ENCODE measurements at regions of chr4 and their contacts with region 1.

Region 1: DNA sequence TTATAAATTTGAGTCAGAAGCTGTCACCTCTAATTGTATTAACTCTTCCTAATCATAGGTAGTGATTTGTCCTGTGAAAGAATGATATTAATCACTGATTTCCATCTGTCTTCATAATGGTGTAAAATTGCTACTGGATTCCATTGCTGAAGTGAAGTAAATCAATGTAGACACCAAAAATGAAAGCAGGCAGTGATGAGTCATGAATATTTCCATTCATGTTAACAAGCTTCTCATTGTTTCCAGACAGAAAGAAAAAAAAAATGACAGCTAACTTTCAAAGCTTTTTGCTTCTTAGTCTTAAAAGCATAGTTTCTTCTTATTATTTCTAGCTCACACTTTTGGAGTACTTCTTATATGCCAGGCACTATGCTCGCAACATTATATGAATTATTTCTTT is 21.5 kb downstream of the FAM114A1 start:
- DNase-seq: peak; percentile 69
- CTCF ChIP-seq: no peak

Region 2: GRCh38 chr4:38565271-38566199 is 323.6 kb before region 1 on chr4:
- in situ Hi-C with region 1: no loop called
- DNase-seq: no peak
- CTCF ChIP-seq: no peak

Region 3: DNA sequence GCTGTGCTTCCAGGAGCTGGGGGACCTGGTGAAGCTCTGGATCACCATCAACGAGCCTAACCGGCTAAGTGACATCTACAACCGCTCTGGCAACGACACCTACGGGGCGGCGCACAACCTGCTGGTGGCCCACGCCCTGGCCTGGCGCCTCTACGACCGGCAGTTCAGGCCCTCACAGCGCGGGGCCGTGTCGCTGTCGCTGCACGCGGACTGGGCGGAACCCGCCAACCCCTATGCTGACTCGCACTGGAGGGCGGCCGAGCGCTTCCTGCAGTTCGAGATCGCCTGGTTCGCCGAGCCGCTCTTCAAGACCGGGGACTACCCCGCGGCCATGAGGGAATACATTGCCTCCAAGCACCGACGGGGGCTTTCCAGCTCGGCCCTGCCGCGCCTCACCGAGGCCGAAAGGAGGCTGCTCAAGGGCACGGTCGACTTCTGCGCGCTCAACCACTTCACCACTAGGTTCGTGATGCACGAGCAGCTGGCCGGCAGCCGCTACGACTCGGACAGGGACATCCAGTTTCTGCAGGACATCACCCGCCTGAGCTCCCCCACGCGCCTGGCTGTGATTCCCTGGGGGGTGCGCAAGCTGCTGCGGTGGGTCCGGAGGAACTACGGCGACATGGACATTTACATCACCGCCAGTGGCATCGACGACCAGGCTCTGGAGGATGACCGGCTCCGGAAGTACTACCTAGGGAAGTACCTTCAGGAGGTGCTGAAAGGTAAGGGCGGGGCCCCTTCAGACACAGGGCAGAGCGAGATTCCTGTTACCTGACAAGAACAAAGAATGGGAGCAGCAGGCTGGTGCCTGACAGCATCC is 557.8 kb after region 1 on chr4:
- in situ Hi-C with region 1: loop called (anchors 25 kb)
- DNase-seq: peak; percentile 81
- CTCF ChIP-seq: peak; percentile 44